ENCODE measurements at regions of chr3 and their contacts with region 1.

Region 1: DNA sequence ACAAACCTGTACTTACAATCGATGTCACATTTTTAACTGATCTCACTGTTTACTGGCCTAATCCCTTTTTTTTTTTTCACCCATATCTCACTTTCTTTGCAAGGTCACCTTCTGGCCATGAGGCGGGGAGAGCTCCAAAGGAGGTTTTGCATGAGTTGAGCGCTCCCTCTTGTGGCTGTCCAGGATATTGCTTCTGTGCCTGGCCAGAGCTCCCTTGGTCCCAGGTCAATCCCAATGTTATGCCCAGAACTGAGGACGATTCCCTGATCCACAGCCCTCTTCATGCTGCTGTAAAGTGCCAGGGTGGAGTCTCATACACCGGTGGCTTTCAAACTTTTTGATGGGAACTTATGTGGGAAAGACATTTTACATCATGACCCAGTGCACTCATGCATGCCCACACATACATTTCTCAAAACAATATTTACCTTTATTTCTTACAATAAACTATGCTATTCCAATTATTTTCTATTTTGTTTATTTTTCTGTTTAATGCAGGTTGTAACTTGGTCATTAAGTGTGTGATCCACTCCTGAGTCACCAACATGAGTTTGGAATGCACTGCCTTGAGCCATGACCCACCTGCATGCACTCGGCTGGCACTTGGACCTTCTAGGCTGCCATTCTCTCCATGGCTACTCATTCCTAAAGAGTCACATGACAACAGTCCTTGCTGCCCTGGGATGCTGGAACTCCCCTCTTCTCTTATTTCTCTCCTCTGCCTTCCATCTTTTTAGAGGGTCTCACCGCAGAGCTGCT is 9.6 kb upstream of the SST start:
- DNase-seq: peak; percentile 63 to 96
- H3K4me3 ChIP-seq: no peak overlapping the region
- H3K27ac ChIP-seq: no peak overlapping the region
- H3K4me1 ChIP-seq: no peaks in the 10 kb centered on the region; a peak in 1 of 7 replicates
- H3K27me3 ChIP-seq: peaks cover 0 to 3% (median 0%) of the 10 kb centered on the region in 4 experiments; a peak in 1 of 7 replicates
- CTCF ChIP-seq: peak; percentile 86 to 98 (median 96)
- EP300 ChIP-seq: no peak
- POLR2A ChIP-seq: no peak
- RAD21 ChIP-seq: peak; percentile 99

Region 2: GRCh38 chr3:187227658-187228258 is 452.1 kb before region 1 on chr3:
- CTCF ChIA-PET with region 1: interaction called, 79 read pairs
- POLR2A ChIA-PET with region 1: no interaction called
- DNase-seq: no peak
- H3K4me3 ChIP-seq: no peak overlapping the region
- H3K27ac ChIP-seq: no peak overlapping the region
- H3K4me1 ChIP-seq: no peaks in the 10 kb centered on the region
- H3K27me3 ChIP-seq: no peaks in the 10 kb centered on the region
- CTCF ChIP-seq: no peak
- EP300 ChIP-seq: no peak
- POLR2A ChIP-seq: no peak
- RAD21 ChIP-seq: no peak

Region 3: DNA sequence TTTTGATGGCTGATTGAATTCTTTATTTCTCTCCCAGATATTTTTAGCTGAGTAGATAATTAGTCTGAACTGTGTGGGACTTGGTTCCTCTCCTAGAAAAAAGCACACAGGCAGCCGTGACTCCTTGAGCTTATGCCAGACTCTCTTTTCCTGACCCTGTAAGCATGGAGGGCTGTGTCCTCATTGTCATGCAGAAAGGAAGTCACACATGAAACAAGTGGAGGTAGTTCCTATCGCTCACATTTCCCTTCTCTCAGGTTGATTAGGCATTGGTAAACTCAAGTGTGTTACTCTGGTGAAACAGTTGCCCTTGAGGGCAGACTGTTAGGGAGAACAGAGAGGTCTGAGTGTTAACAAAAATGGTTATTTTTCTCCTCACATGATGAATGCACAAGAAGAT is 318.0 kb before region 1 on chr3:
- CTCF ChIA-PET with region 1: interaction called, 11 read pairs
- POLR2A ChIA-PET with region 1: no interaction called
- DNase-seq: no peak
- H3K4me3 ChIP-seq: no peak overlapping the region; a peak in 1 of 8 replicates
- H3K27ac ChIP-seq: no peak overlapping the region
- H3K4me1 ChIP-seq: peaks cover 0 to 29% (median 20%) of the 10 kb centered on the region in 4 experiments; a peak in 5 of 7 replicates
- H3K27me3 ChIP-seq: no peaks in the 10 kb centered on the region; a peak in 1 of 7 replicates
- CTCF ChIP-seq: no peak
- EP300 ChIP-seq: no peak
- POLR2A ChIP-seq: no peak
- RAD21 ChIP-seq: no peak

Region 4: DNA sequence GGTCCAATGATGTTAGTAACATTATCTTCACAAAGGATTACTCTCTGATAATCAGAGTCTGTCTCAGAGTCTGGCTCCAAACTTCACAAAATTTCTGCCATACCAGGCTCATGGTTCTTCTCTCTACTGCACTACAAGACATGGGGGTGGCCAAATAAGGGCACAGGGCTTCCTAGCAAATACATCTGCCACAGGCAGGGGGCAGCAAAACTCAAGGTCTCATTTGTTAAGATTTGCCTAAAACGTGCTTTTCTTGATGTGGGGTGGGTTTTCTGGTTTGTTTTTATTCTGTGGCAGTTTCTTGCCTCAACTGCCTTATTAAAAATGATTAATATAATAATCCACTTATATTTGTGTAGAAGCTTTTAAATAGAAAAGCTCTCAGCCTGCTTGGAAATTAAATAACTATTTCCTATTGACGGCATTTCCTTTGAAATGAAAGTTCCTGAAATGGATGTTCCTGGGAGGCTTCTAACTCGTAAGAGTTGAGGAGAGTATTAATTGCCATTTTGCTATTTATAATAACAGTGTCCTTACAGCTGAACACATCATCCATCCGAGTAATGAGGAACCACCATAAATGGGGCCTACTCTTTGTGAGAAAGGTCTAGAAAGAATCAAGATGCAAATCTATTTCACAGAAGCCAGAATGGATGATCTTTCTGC is 63.4 kb before region 1 on chr3:
- CTCF ChIA-PET with region 1: interaction called, 124 read pairs
- POLR2A ChIA-PET with region 1: no interaction called
- DNase-seq: peak; percentile 38 to 76
- H3K4me3 ChIP-seq: no peak overlapping the region
- H3K27ac ChIP-seq: no peak overlapping the region
- H3K4me1 ChIP-seq: peaks cover 2 to 10% (median 7%) of the 10 kb centered on the region in 4 experiments; a peak in 5 of 7 replicates
- H3K27me3 ChIP-seq: peaks cover 22 to 33% (median 27%) of the 10 kb centered on the region in 4 experiments; a peak in 5 of 7 replicates
- CTCF ChIP-seq: peak; percentile 52 to 77 (median 72)
- EP300 ChIP-seq: no peak
- POLR2A ChIP-seq: no peak
- RAD21 ChIP-seq: peak; percentile 77 to 83

Region 5: DNA sequence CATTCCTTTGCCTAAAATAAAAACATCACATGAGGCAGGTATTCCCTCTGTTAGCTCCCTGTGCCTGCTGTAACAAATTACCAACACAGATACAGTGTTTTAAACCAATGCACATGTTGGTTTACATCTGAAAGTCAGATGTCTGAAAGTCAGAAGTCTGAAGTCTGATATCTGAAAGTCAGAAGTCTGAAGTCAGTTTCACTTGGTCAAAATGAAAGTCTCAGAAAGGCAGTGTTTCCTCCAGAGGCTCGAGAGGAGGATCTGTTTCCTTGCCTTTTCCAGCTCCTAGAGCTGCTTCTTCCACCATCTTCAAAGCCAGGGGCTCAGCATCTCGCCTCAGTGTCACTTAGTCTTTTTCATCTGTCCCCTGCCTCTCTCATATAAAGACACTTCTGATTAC is 31.6 kb before region 1 on chr3:
- CTCF ChIA-PET with region 1: interaction called, 15 read pairs
- POLR2A ChIA-PET with region 1: no interaction called
- DNase-seq: no peak
- H3K4me3 ChIP-seq: no peak overlapping the region
- H3K27ac ChIP-seq: no peak overlapping the region
- H3K4me1 ChIP-seq: no peaks in the 10 kb centered on the region
- H3K27me3 ChIP-seq: peaks cover 0 to 2% (median 0%) of the 10 kb centered on the region in 4 experiments; a peak in 1 of 7 replicates
- CTCF ChIP-seq: no peak
- EP300 ChIP-seq: no peak
- POLR2A ChIP-seq: no peak
- RAD21 ChIP-seq: no peak

Region 6: DNA sequence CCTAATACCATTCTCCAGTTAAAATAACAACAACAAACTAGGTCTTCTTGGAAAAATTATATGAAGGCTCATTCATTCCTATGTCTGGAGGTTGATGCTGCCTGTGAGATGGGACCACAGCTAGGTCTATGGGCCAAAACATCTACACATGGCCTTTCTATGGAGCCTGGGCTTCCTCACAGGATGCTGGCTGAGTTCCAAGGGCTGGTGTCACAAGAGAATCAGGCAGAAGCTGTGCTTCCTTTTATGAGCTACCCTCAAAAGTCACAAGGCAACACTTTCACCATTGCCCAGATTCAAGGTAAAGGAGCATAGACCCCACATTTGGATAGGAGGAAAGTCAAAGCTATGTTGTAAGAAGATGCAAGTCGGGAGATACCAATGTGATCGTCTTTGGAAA is 27.2 kb after region 1 on chr3:
- CTCF ChIA-PET with region 1: interaction called, 108 read pairs
- POLR2A ChIA-PET with region 1: no interaction called
- DNase-seq: no peak
- H3K4me3 ChIP-seq: no peak overlapping the region
- H3K27ac ChIP-seq: no peak overlapping the region
- H3K4me1 ChIP-seq: no peaks in the 10 kb centered on the region
- H3K27me3 ChIP-seq: no peaks in the 10 kb centered on the region
- CTCF ChIP-seq: no peak
- EP300 ChIP-seq: no peak
- POLR2A ChIP-seq: no peak
- RAD21 ChIP-seq: no peak